Activated CD8-positive, alpha-beta memory T cell treated with anti-CD3 and anti-CD28 coated beads, Interleukin-2, amount 10 ng/mL, durations not matched to agents 7 days and 5 days (primary cell): ENCODE measurements at regions of chr12 and their contacts with region 1.

Region 1: DNA sequence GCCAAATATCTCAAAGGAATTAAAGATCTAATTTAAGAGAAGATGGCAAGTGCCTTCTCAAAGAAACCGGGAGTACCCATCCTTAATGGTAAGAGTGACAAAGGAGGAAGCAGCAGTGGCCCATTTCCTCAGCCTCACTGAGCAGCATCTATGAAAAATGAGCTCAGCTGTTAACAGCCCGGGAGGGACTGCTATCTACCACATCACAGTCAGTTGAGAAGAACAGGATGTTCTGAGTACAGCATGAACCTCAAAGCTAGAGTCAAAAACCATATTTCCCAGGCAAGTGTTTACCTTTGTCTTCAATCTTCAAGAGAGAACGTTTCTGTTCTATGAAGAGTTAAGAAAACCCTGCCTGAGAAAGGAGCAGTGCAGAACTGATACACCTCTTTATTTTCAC is 115.0 kb downstream of the BTG1 start:
- DNase-seq: peak; percentile 82
- ATAC-seq: peak; percentile 96
- H3K4me3 Mint-ChIP-seq: peak overlapping the region; percentile 47
- H3K27ac Mint-ChIP-seq: peak overlapping the region; percentile 92
- H3K4me1 Mint-ChIP-seq: peaks cover 63% of the 10 kb centered on the region
- H3K27me3 Mint-ChIP-seq: no peaks in the 10 kb centered on the region

Region 2: DNA sequence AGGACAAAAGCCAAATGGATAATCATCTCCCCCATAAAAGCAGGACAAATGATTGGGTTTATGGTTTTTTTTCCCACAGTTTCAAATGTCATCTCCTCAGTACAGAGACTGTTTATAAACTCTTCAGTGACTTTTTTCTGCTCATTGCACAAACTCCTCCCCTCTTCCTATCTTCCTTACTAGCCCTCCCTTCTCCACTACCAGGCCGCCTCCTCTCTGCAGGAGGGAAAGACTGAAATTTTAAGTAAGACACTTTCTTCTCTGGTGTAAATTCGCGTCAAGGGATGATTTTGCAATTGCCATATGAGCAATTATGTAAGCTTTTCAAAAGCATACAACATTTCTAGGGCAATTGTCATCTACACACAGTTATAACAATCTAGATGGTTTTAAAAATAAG is 78.0 kb after region 1 on chr12:
- CTCF ChIA-PET with region 1: no interaction called
- DNase-seq: no peak
- ATAC-seq: no peak
- H3K4me3 Mint-ChIP-seq: no peak overlapping the region
- H3K27ac Mint-ChIP-seq: no peak overlapping the region
- H3K4me1 Mint-ChIP-seq: peaks cover 18% of the 10 kb centered on the region
- H3K27me3 Mint-ChIP-seq: no peaks in the 10 kb centered on the region

Region 3: DNA sequence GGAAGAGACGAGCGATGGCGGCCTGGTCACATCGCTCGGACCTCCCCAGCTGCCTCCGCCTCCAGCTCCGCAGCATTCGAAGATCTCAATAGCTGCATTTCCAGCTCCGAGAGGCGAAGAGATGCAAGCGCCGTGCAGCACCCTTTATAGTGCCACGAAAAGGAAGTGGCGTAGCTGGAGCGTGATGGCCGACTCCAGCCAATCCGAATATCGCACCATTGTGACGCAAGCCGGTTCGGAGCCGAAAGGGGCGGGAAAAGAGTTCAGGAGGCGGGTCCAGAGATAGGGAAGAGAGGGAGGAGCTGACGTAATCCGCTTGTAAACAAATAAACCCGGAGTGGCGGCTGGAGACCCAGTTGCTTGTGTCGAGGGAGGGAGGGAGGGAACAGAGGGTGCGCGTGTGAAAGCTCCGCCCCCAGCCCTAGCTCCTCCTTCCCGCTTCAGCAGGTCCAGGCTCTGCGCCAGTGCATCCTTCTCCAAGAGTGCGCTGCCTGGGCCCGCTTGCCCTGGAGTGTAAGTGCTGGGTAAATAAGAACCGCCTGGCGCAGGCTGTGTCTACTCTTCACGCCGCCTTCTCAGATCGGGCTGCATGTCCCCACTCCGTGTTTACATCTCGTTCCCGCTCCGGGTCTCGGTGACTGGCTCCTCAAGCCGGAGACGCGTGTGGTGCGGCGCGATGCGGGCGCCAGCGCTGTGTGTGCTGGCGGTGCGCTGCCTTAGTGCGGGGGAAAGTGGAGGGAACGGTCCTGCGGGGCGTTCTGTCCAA is 115.3 kb after region 1 on chr12 and contains the start of gene BTG1:
- CTCF ChIA-PET with region 1: interaction called, 16 read pairs
- DNase-seq: peak; percentile 100
- ATAC-seq: peak; percentile 74
- H3K4me3 Mint-ChIP-seq: peak within 1 kb of the TSS; percentile 94
- H3K27ac Mint-ChIP-seq: peak within 1 kb of the TSS; percentile 94
- H3K4me1 Mint-ChIP-seq: peaks cover 19% of the 10 kb centered on the region
- H3K27me3 Mint-ChIP-seq: no peaks in the 10 kb centered on the region
- total RNA-seq, gene BTG1: 91.7 to 132 TPM